Endothelial cell of umbilical vein (primary cell): ENCODE measurements at regions of chr1 and their contacts with region 1.

Region 1: DNA sequence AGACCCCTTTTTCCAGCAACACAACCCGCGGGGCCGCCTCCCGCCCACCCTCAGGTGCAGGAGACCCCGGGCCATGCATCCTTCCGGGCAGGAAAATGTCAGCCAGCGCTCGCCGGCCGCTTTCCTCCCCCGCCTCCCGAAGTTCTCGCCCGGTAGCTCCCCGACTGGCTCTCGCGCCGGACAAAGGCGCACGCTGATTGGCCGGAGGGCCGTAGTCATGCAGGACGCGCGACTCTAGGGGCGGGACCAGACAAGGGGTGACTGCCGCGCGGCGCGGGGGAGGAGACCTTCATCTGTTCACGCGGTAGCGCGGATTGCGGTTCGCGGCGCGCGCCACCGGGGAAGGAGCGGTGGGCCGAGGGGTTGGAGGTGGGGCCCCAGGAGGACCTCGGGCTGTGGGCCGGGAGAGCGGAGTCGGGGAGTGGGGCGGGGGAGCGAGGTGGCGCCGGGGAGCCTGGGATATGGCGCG is at the start of gene FLVCR1:
- DNase-seq: peak; percentile 94
- H3K4me3 ChIP-seq: peak within 1 kb of the TSS; percentile 10 to 88 (median 51)
- H3K27ac ChIP-seq: peak within 1 kb of the TSS; percentile 24
- H3K4me1 ChIP-seq: peaks cover 19% of the 10 kb centered on the region
- H3K27me3 ChIP-seq: no peaks in the 10 kb centered on the region
- CTCF ChIP-seq: no peak
- POLR2A ChIP-seq: peak; percentile 57
- total RNA-seq, gene FLVCR1: 11.9 and 12.0 TPM in 2 replicates

Region 2: GRCh38 chr1:211965108-211965805 is 892.8 kb before region 1 on chr1:
- CTCF ChIA-PET with region 1: no interaction called
- POLR2A ChIA-PET with region 1: interaction called, 10 read pairs
- dilution Hi-C with region 1: no loop called
- intact Hi-C with region 1: no loop called
- DNase-seq: no peak
- H3K4me3 ChIP-seq: no peak overlapping the region
- H3K27ac ChIP-seq: no peak overlapping the region
- H3K4me1 ChIP-seq: no peaks in the 10 kb centered on the region
- H3K27me3 ChIP-seq: no peaks in the 10 kb centered on the region
- CTCF ChIP-seq: no peak
- POLR2A ChIP-seq: no peak

Region 3: DNA sequence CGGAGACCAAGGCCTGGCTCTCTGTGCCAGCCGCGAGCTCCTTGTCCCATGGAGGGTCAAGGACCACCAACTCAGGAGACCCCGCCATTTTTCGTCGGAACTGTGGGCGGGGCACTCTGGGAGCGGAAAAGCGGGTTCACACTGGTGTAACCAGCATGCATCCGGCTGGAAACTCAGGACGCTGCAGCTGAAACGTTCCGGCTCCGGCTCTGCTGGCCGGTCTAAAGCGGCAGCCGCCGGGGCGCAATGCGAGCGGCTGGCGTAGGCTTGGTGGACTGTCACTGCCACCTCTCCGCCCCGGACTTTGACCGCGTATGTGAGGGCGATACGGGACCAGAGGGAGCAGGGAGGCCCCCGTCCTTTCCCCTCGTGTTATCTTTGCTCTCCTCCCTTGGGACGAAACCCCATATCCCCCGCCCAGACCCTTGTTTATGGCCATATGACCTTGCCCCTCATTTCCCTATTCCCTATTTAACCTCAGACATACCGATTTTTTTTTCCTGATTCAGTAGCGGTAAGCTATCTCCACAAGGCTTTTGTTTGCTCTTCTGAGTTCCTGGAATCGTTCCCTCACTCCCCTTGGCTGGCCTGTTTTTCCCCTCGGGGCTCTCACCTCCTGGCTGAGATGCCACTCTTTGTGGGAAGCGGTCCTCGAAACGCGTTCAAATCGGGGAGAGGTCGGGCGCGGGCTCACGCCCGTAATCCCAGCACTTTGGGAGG is 66.2 kb before region 1 on chr1 and contains the starts of genes NSL1 and TATDN3:
- CTCF ChIA-PET with region 1: interaction called, 3 read pairs
- POLR2A ChIA-PET with region 1: no interaction called
- dilution Hi-C with region 1: no loop called
- intact Hi-C with region 1: loop called (anchors 1 kb)
- DNase-seq: peak; percentile 95
- H3K4me3 ChIP-seq: peak within 1 kb of the TSS; percentile 77 to 97 (median 94)
- H3K27ac ChIP-seq: peak within 1 kb of the TSS; percentile 81
- H3K4me1 ChIP-seq: peaks cover 21% of the 10 kb centered on the region
- H3K27me3 ChIP-seq: no peaks in the 10 kb centered on the region
- CTCF ChIP-seq: no peak
- POLR2A ChIP-seq: peak; percentile 92
- total RNA-seq, gene NSL1: 27.7 and 30.2 TPM in 2 replicates
- total RNA-seq, gene TATDN3: 7.8 and 8.0 TPM in 2 replicates

Region 4: GRCh38 chr1:212814537-212815334 is 43.3 kb before region 1 on chr1:
- CTCF ChIA-PET with region 1: interaction called, 10 read pairs
- POLR2A ChIA-PET with region 1: interaction called, 4 read pairs
- dilution Hi-C with region 1: no loop called
- intact Hi-C with region 1: no loop called
- DNase-seq: peak; percentile 27
- H3K4me3 ChIP-seq: no peak overlapping the region
- H3K27ac ChIP-seq: no peak overlapping the region
- H3K4me1 ChIP-seq: peaks cover 2% of the 10 kb centered on the region
- H3K27me3 ChIP-seq: no peaks in the 10 kb centered on the region
- CTCF ChIP-seq: no peak
- POLR2A ChIP-seq: no peak